HepG2 (cell line): ENCODE measurements at regions of chr17 and their contacts with region 1.

Region 1: GRCh38 chr17:60720763-60721531 is 43.3 kb downstream of the BCAS3 start:
- DNase-seq: peak; percentile 64
- ATAC-seq: peak; percentile 70
- H3K4me3 ChIP-seq: no peak overlapping the region
- H3K27ac ChIP-seq: no peak overlapping the region
- H3K4me1 ChIP-seq: no peaks in the 10 kb centered on the region
- H3K27me3 ChIP-seq: no peaks in the 10 kb centered on the region
- CTCF ChIP-seq: peak; percentile 88
- EP300 ChIP-seq: no peak
- POLR2A ChIP-seq: no peak
- RAD21 ChIP-seq: peak; percentile 89

Region 2: DNA sequence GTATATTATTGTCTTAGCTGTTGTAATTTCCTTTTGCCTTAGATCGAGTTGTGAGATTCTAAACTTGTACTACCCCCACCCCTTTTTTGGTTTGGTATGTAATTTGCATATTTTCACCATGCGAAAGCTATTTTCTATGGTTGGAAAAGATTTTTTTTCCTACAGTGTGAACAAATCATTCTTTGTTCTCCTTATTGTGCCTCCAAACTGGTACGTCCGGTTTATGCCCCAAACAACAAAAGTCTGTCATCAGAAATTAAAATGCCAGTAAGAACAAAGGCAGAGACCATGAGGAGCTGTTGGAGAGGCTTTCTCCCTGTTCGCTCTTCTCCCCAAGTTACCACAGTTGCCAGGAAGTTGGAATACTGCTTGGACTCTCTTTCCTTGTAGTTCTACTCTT is 22.9 kb after region 1 on chr17:
- CTCF ChIA-PET with region 1: no interaction called
- POLR2A ChIA-PET with region 1: no interaction called
- in situ Hi-C with region 1: no loop called
- intact Hi-C with region 1: no loop called
- DNase-seq: no peak
- ATAC-seq: no peak
- H3K4me3 ChIP-seq: no peak overlapping the region
- H3K27ac ChIP-seq: no peak overlapping the region
- H3K4me1 ChIP-seq: no peaks in the 10 kb centered on the region
- H3K27me3 ChIP-seq: no peaks in the 10 kb centered on the region
- CTCF ChIP-seq: no peak
- EP300 ChIP-seq: no peak
- POLR2A ChIP-seq: no peak
- RAD21 ChIP-seq: no peak

Region 3: DNA sequence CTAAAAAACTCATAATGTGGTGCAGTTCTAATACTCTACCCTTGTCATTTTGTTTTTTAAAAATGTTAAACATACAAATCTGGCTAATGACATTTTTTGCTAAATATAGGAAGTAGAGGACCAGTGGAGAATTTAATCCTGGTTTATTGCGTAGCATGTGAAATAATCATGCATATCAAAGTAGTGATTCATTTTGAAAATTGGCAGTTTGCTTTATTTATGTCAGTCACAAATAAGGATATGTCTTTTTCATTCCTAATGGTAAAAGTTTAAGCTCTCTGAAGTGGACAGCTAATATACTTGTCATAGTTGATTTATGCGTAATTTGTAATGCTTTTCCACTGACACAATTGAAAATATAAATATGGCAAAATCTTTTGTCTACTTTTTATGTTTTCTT is 180.9 kb after region 1 on chr17:
- CTCF ChIA-PET with region 1: no interaction called
- POLR2A ChIA-PET with region 1: no interaction called
- in situ Hi-C with region 1: no loop called
- intact Hi-C with region 1: loop called (anchors 10 kb)
- DNase-seq: no peak
- ATAC-seq: no peak
- H3K4me3 ChIP-seq: no peak overlapping the region
- H3K27ac ChIP-seq: no peak overlapping the region
- H3K4me1 ChIP-seq: no peaks in the 10 kb centered on the region
- H3K27me3 ChIP-seq: no peaks in the 10 kb centered on the region
- CTCF ChIP-seq: no peak
- EP300 ChIP-seq: no peak
- POLR2A ChIP-seq: no peak
- RAD21 ChIP-seq: no peak

Region 4: DNA sequence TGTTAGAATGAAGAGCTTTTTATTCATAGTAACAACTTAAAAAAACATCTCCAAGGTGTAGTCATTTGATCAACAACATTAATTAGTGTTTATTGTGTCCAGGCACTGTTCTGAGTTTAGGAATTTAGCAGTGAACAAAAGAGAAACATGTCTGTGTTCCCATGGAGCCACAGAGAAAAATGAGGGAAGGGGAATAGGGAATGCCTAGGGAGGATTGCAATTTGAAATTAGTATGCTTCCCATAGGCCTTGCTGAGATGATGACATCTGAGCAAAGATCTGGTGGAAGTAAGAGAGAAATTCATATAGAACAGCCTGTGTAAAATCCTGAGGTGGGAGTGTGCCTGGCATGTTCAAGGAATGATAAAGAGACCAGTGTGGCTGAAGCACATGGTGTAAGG is 274.7 kb after region 1 on chr17:
- CTCF ChIA-PET with region 1: no interaction called
- POLR2A ChIA-PET with region 1: no interaction called
- in situ Hi-C with region 1: no loop called
- intact Hi-C with region 1: loop called (anchors 2 kb)
- DNase-seq: no peak
- ATAC-seq: no peak
- H3K4me3 ChIP-seq: no peak overlapping the region
- H3K27ac ChIP-seq: no peak overlapping the region
- H3K4me1 ChIP-seq: peaks cover 7% of the 10 kb centered on the region
- H3K27me3 ChIP-seq: no peaks in the 10 kb centered on the region
- CTCF ChIP-seq: no peak
- EP300 ChIP-seq: no peak
- POLR2A ChIP-seq: no peak
- RAD21 ChIP-seq: no peak